B cell (primary cell): ENCODE measurements at regions of chr12 and their contacts with region 1.

Region 1: DNA sequence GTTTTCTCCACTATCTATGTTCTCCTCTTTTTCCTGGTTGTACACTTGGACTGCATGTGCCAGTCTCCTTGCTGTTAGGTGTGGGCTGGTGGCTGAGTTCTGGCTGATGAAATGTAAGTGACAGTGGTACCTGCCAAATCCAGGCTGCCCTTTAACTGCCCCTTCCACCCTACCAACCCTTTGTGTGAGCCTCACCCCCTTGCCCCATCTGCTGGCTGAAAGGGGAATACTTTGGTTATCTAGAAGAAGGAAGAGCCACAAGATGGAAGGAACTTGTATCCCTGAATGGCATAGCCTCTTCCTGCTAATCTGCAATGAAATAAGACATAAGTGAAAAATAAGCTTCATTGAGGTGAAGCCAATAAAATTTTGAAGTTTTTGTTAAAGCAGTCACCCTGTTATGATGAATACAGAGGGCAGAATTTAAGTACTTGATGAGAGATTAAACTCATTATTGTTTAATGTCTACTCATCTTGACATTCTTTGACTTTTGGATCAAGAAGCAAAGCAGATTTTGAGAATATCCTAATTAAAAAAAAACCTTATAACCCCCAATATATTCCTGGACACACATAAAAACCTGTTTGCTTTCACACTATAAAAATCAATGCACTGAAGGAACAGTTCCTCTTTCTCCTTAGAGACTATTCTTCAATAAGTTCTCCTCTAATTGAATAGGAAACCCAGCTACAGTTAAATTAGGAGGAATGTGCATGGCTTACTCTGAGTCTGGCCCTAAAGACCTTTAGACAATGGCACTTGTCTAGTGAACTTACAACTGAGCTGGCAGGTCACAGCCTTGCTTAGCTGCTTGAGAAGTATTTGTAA is 262.6 kb upstream of the BTG1 start:
- DNase-seq: peak; percentile 74
- ATAC-seq: peak; percentile 49
- H3K4me3 ChIP-seq: no peak overlapping the region
- H3K4me3 Mint-ChIP-seq: peak overlapping the region; percentile 0
- H3K27ac ChIP-seq: peak overlapping the region; percentile 40 to 71
- H3K27ac Mint-ChIP-seq: peak overlapping the region; percentile 88
- H3K4me1 ChIP-seq: peaks cover 43% of the 10 kb centered on the region in 2 donors
- H3K4me1 Mint-ChIP-seq: peaks cover 67% of the 10 kb centered on the region
- H3K27me3 ChIP-seq: no peaks in the 10 kb centered on the region
- H3K27me3 Mint-ChIP-seq: no peaks in the 10 kb centered on the region
- CTCF ChIP-seq: peak; percentile 57

Region 2: GRCh38 chr12:90896164-90896563 is 1512.1 kb before region 1 on chr12:
- CTCF ChIA-PET with region 1: no interaction called
- POLR2A ChIA-PET with region 1: no interaction called
- intact Hi-C with region 1: no loop called
- DNase-seq: no peak
- ATAC-seq: no peak
- H3K4me3 ChIP-seq: no peak overlapping the region
- H3K4me3 Mint-ChIP-seq: no peak overlapping the region
- H3K27ac ChIP-seq: no peak overlapping the region
- H3K27ac Mint-ChIP-seq: no peak overlapping the region
- H3K4me1 ChIP-seq: no peaks in the 10 kb centered on the region
- H3K4me1 Mint-ChIP-seq: no peaks in the 10 kb centered on the region
- H3K27me3 ChIP-seq: no peaks in the 10 kb centered on the region
- H3K27me3 Mint-ChIP-seq: peaks cover 4% of the 10 kb centered on the region
- CTCF ChIP-seq: no peak

Region 3: DNA sequence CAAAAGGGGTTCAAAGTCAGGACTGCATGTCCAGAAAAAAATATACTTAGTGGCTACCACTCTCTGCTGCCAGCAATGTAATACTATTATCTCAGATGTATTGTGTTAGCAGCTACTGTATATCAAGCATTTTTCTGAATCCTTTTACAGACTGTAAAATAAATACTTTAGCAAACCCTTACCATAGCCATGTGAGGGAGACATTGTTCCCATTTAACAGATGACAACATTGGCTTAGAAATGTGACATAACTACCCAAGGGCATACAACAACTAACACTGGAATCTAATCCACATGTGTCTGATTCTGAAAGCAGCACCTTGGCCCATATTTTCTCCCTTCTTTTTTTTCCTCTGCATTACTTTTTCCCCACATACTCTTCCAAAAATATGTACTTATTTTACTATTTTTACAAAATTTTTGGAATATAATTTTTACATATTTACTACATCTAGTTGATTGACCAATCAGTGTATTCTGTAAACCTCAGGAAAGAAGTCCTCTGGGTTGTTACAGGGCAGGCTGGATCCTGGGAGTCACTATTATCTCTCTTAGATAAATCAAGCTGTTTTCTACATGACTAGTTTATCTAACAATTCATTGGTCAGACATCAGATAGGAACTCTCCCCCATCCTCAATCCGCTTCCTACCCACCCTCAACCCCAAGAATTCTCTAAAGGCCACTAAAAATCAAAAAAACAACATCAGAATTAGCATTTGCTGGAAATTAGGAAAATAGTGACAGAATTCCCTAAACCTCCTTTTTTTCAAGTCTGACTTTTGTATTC is 416.7 kb before region 1 on chr12:
- CTCF ChIA-PET with region 1: no interaction called
- POLR2A ChIA-PET with region 1: no interaction called
- intact Hi-C with region 1: loop called (anchors 10 kb)
- DNase-seq: peak; percentile 58
- ATAC-seq: peak; percentile 61
- H3K4me3 ChIP-seq: no peak overlapping the region
- H3K4me3 Mint-ChIP-seq: no peak overlapping the region
- H3K27ac ChIP-seq: no peak overlapping the region
- H3K27ac Mint-ChIP-seq: no peak overlapping the region
- H3K4me1 ChIP-seq: no peaks in the 10 kb centered on the region
- H3K4me1 Mint-ChIP-seq: peaks cover 3% of the 10 kb centered on the region
- H3K27me3 ChIP-seq: no peaks in the 10 kb centered on the region
- H3K27me3 Mint-ChIP-seq: no peaks in the 10 kb centered on the region
- CTCF ChIP-seq: peak; percentile 34

Region 4: DNA sequence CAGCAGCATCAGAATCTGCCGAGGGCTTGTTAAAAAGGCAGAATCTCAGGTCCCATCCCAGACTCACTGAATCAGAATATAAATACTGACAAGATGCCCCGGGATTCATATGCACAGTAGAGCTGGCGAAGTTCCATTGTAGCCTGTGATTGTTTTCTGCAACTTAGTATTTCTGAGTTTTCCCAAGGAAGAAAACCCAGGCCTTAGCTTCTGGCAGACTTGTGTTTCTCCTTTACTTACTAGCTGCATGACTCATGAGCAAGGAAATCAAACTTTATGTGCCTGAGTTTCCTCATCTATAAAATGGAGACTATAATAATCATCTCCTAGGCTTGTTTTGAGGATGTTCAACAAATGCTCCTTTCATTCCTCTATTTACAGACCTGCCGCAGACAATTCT is 16.1 kb after region 1 on chr12:
- CTCF ChIA-PET with region 1: interaction called, 26 read pairs
- POLR2A ChIA-PET with region 1: interaction called, 3 read pairs
- intact Hi-C with region 1: loop called (anchors 2 kb)
- DNase-seq: no peak
- ATAC-seq: no peak
- H3K4me3 ChIP-seq: no peak overlapping the region
- H3K4me3 Mint-ChIP-seq: no peak overlapping the region
- H3K27ac ChIP-seq: no peak overlapping the region
- H3K27ac Mint-ChIP-seq: peak overlapping the region; percentile 66
- H3K4me1 ChIP-seq: peaks cover 18 to 24% of the 10 kb centered on the region in 2 donors
- H3K4me1 Mint-ChIP-seq: peaks cover 64% of the 10 kb centered on the region
- H3K27me3 ChIP-seq: no peaks in the 10 kb centered on the region
- H3K27me3 Mint-ChIP-seq: no peaks in the 10 kb centered on the region
- CTCF ChIP-seq: no peak

Region 5: DNA sequence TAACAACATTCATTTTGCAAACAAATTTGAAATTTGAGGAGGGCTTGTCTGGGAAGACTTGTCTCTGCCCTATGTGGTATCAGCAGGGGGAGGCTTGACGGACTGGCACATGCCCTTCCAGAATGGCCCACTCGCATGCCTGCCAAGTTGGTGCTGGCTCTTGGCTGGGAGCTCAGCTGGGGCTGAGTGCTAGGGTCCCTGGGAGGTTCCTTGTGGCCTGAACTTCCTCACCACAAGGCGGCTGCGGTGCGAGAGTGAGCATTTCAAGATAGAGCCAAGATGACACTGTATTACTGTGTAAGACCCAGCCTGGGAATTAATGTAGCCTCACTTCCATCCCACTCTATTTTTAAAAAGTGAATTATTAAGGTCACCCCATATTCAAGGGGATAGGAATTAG is 22.9 kb after region 1 on chr12:
- CTCF ChIA-PET with region 1: interaction called, 26 read pairs
- POLR2A ChIA-PET with region 1: interaction called, 3 read pairs
- intact Hi-C with region 1: no loop called
- DNase-seq: peak; percentile 60
- ATAC-seq: peak; percentile 56
- H3K4me3 ChIP-seq: no peak overlapping the region
- H3K4me3 Mint-ChIP-seq: no peak overlapping the region
- H3K27ac ChIP-seq: no peak overlapping the region
- H3K27ac Mint-ChIP-seq: peak overlapping the region; percentile 71
- H3K4me1 ChIP-seq: peaks cover 52 to 55% of the 10 kb centered on the region in 2 donors
- H3K4me1 Mint-ChIP-seq: peaks cover 73% of the 10 kb centered on the region
- H3K27me3 ChIP-seq: no peaks in the 10 kb centered on the region
- H3K27me3 Mint-ChIP-seq: no peaks in the 10 kb centered on the region
- CTCF ChIP-seq: peak; percentile 32

Region 6: DNA sequence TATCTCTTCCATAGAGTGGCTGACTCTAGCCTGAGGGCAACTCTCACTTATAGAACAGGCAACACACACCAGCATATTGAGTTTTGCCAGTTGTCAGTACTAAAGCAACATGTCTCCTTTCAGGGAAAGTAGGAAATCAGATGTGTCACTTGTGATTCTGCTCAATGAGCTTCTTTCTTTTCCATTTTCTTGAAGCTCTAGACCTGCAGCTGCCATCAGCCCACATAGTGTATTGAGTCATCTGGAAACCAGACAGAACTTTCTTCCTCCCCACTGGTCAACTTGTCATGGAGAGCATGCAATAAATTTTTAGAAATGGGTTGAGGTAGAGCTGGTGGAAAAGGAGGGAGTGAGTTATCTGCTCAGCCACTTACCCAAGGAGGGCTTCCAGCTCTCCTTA is 85.5 kb after region 1 on chr12:
- CTCF ChIA-PET with region 1: interaction called, 10 read pairs
- POLR2A ChIA-PET with region 1: no interaction called
- intact Hi-C with region 1: no loop called
- DNase-seq: no peak
- ATAC-seq: no peak
- H3K4me3 ChIP-seq: no peak overlapping the region
- H3K4me3 Mint-ChIP-seq: no peak overlapping the region
- H3K27ac ChIP-seq: peak overlapping the region in 1 of 2 donors; percentile 53
- H3K27ac Mint-ChIP-seq: peak overlapping the region; percentile 81
- H3K4me1 ChIP-seq: peaks cover 72 to 73% of the 10 kb centered on the region in 2 donors
- H3K4me1 Mint-ChIP-seq: peaks cover 71% of the 10 kb centered on the region
- H3K27me3 ChIP-seq: no peaks in the 10 kb centered on the region
- H3K27me3 Mint-ChIP-seq: no peaks in the 10 kb centered on the region
- CTCF ChIP-seq: no peak

Region 7: DNA sequence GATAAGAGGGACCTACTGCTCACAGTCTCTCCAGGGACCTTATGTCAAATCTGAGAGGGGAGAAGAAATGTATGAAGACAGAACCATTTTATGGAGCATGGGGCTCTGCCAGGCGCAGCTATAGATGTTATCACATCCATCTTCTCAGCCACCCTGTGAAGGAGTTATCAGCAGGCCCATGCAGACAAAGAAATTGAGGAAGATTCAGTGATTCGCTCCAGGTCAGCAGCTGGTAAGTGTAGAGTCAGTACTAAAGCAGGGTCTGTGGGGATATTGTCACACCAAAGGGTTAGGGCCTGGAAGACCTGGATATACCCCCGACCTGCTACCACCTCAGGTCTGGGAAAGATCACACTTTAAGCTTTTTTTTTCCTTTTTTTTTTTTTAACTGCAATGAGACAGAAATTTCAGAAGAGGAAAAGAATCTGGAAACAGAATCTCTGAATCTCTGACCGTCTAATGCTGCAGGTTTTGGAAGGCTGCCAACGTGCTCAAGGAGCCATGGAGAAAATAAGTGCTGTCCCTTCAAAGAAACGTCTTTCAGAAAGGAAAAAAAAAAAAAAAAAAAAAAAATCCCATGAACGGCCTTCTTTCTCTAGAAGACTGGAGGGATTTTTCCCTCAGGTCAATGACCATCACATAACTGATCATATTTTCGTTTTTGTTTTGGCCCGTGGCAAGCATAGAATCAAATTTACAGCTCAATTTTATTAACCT is 221.2 kb after region 1 on chr12:
- CTCF ChIA-PET with region 1: no interaction called
- POLR2A ChIA-PET with region 1: no interaction called
- intact Hi-C with region 1: no loop called
- DNase-seq: no peak
- ATAC-seq: no peak
- H3K4me3 ChIP-seq: no peak overlapping the region
- H3K4me3 Mint-ChIP-seq: no peak overlapping the region
- H3K27ac ChIP-seq: no peak overlapping the region
- H3K27ac Mint-ChIP-seq: no peak overlapping the region
- H3K4me1 ChIP-seq: no peaks in the 10 kb centered on the region
- H3K4me1 Mint-ChIP-seq: no peaks in the 10 kb centered on the region
- H3K27me3 ChIP-seq: no peaks in the 10 kb centered on the region
- H3K27me3 Mint-ChIP-seq: no peaks in the 10 kb centered on the region
- CTCF ChIP-seq: no peak